Dorsolateral prefrontal cortex (tissue), 120 donors: ENCODE measurements at regions of chr2 and their contacts with region 1.

Region 1: GRCh38 chr2:153478334-153479261 is at the start of gene RPRM:
- DNase-seq: peak; percentile 46 to 83 (median 64)
- H3K4me3 ChIP-seq: peak within 1 kb of the TSS; percentile 35 to 75 (median 59)
- H3K27ac ChIP-seq: peak within 1 kb of the TSS in 13 of 59 donors; percentile 10 to 61 (median 34)
- H3K27me3 ChIP-seq: peaks cover 0 to 78% (median 45%) of the 10 kb centered on the region in 45 donors
- CTCF ChIP-seq: peak; percentile 54 to 97 (median 89)
- total RNA-seq, gene RPRM: 1.8 to 28.0 (median 10.7) TPM

Region 2: GRCh38 chr2:152740743-152741328 is 737.8 kb before region 1 on chr2:
- intact Hi-C with region 1: loop called in 1 of 2 experiments (anchors 10 kb)
- DNase-seq: no peak
- H3K4me3 ChIP-seq: no peak overlapping the region
- H3K27ac ChIP-seq: no peak overlapping the region
- H3K27me3 ChIP-seq: no peaks in the 10 kb centered on the region
- CTCF ChIP-seq: peak; percentile 75 to 97 (median 90)

Region 3: DNA sequence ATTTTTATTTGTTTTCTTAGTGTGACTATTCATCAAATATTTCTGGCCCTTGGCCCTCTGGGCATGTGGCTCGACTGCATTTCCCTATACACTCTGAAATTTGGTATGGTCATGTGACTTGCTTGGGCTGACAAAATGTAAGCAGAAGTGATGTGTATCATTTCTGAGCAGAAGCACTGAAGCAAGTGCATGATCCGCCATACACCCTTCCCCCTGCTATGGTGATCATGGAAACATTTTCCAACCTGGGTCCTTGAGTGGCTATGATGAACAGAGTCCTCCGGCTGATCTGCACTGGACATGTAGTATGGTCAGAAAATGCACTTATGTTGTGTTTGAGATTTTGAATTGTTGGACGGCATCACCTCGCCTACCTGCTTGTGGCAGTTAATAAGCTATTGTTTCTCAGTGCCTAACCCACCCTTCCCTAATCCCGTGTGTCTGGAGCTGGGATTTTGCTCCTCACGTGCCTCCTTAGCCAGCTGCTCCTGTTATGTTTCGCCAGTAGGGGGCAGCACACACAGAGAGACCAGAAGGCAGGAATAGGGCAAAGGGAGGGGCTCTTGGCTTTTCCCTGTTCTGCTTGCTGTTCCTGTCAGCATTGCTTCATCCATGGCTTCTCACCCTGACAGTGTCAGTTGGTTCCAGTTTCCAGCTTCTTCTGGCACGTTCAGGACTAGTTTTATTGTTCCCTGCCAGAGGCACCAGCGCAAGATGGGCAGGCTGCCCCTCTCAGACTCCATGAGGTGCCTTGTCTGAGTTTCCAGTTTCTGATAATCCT is 552.9 kb before region 1 on chr2:
- intact Hi-C with region 1: loop called in 1 of 2 experiments (anchors 10 kb)
- DNase-seq: peak in 8 of 10 donors; percentile 15 to 66 (median 46)
- H3K4me3 ChIP-seq: no peak overlapping the region
- H3K27ac ChIP-seq: no peak overlapping the region
- H3K27me3 ChIP-seq: peaks cover 0 to 8% (median 0%) of the 10 kb centered on the region in 45 donors
- CTCF ChIP-seq: peak; percentile 16 to 79 (median 66)

Region 4: GRCh38 chr2:153163058-153163457 is 315.5 kb before region 1 on chr2:
- intact Hi-C with region 1: loop called (anchors 2 to 10 kb)
- DNase-seq: peak in 1 of 10 donors; percentile 3
- H3K4me3 ChIP-seq: no peak overlapping the region
- H3K27ac ChIP-seq: no peak overlapping the region
- H3K27me3 ChIP-seq: no peaks in the 10 kb centered on the region
- CTCF ChIP-seq: peak; percentile 25 to 71 (median 52)

Region 5: GRCh38 chr2:153320879-153321278 is 157.7 kb before region 1 on chr2:
- intact Hi-C with region 1: no loop called
- DNase-seq: no peak
- H3K4me3 ChIP-seq: no peak overlapping the region
- H3K27ac ChIP-seq: peak overlapping the region in 1 of 59 donors; percentile 27
- H3K27me3 ChIP-seq: no peaks in the 10 kb centered on the region
- CTCF ChIP-seq: no peak

Region 6: GRCh38 chr2:153416071-153416470 is 62.5 kb before region 1 on chr2:
- intact Hi-C with region 1: no loop called
- DNase-seq: no peak
- H3K4me3 ChIP-seq: no peak overlapping the region
- H3K27ac ChIP-seq: no peak overlapping the region
- H3K27me3 ChIP-seq: no peaks in the 10 kb centered on the region
- CTCF ChIP-seq: no peak

Region 7: DNA sequence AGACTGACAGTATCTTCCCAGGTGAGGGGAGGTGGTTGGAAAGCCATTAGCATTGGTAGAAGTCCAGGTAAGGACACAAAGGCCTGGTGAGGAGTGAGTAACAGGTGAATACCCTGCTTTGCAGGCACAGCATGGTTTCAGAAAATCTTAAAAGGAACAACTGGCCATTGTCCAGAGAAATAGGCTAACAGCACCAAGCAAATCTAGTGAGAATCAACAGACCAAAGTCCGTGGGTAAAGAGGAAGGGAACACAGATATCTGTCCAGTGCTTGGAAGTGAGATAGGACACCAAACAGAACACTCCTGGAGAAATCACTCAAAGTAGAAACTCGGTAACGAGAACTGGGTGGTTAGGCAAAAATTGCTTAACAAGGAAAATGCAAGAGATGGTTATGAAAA is 88.8 kb after region 1 on chr2:
- intact Hi-C with region 1: no loop called
- DNase-seq: no peak
- H3K4me3 ChIP-seq: no peak overlapping the region
- H3K27ac ChIP-seq: no peak overlapping the region
- H3K27me3 ChIP-seq: no peaks in the 10 kb centered on the region
- CTCF ChIP-seq: no peak